ENCODE measurements at regions of chr1 and their contacts with region 1.

Region 1: GRCh38 chr1:108691942-108692723 is at the start of gene PRPF38B:
- DNase-seq: peak; percentile 96 to 99 (median 98)
- ATAC-seq: peak; percentile 91
- H3K4me3 ChIP-seq: peak within 1 kb of the TSS; percentile 74
- H3K27ac ChIP-seq: peak within 1 kb of the TSS; percentile 94
- H3K4me1 ChIP-seq: peaks cover 5 to 7% of the 10 kb centered on the region in 2 experiments; a peak in 3 of 5 replicates
- H3K27me3 ChIP-seq: no peaks in the 10 kb centered on the region
- CTCF ChIP-seq: no peak
- EP300 ChIP-seq: 0 out of 2 replicates have a peak, but pooled peaks have one; percentile 10
- POLR2A ChIP-seq: peak; percentile 99
- RAD21 ChIP-seq: no peak
- polyA plus RNA-seq, gene PRPF38B: 25.3 to 34.3 TPM

Region 2: GRCh38 chr1:108678706-108679105 is 13.4 kb before region 1 on chr1:
- CTCF ChIA-PET with region 1: interaction called, 3 read pairs
- POLR2A ChIA-PET with region 1: interaction called, 48 read pairs
- in situ Hi-C with region 1: no loop called
- intact Hi-C with region 1: no loop called
- DNase-seq: no peak
- ATAC-seq: no peak
- H3K4me3 ChIP-seq: no peak overlapping the region
- H3K27ac ChIP-seq: no peak overlapping the region
- H3K4me1 ChIP-seq: no peaks in the 10 kb centered on the region
- H3K27me3 ChIP-seq: no peaks in the 10 kb centered on the region
- CTCF ChIP-seq: no peak
- EP300 ChIP-seq: no peak
- POLR2A ChIP-seq: no peak
- RAD21 ChIP-seq: no peak

Region 3: DNA sequence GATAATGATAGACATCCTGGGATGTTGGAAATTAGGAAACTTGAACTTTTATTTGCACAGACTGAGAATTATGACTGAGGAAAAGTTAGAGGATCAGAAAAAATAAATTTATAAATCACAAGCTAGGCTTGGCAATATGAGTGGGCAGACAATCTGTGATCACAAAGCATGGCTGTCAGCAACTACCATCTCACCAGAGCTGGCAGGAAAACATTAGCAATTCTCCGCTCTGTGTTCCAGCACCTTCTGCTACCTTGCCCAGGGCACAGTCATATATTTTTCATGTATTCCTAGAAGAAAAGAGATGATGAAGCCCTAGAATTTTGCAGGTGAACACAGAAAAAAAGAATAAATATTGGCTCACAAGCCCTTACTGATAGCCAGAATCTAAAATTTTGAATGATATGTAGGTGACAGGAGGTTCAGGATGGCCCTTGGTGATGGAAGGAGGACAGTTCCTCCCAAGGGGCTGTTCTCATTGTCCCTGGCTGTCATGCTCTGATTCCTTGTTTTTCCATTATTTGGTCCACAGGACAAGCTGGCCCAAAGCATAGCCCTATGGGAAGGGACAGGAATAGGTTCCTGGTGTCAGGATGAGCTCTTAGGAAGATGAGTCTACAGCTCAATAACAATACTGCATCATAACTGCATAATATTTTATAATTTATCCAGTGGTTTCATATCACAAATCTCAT is 42.2 kb after region 1 on chr1:
- CTCF ChIA-PET with region 1: no interaction called
- POLR2A ChIA-PET with region 1: no interaction called
- in situ Hi-C with region 1: no loop called
- intact Hi-C with region 1: no loop called
- DNase-seq: no peak
- ATAC-seq: no peak
- H3K4me3 ChIP-seq: no peak overlapping the region
- H3K27ac ChIP-seq: no peak overlapping the region
- H3K4me1 ChIP-seq: no peaks in the 10 kb centered on the region
- H3K27me3 ChIP-seq: peaks cover 3 to 11% of the 10 kb centered on the region in 2 experiments; a peak in 4 of 5 replicates
- CTCF ChIP-seq: no peak
- EP300 ChIP-seq: no peak
- POLR2A ChIP-seq: no peak
- RAD21 ChIP-seq: no peak

Region 4: GRCh38 chr1:108947871-108948525 is 255.9 kb after region 1 on chr1:
- CTCF ChIA-PET with region 1: no interaction called
- POLR2A ChIA-PET with region 1: no interaction called
- in situ Hi-C with region 1: no loop called
- intact Hi-C with region 1: no loop called
- DNase-seq: no peak
- ATAC-seq: no peak
- H3K4me3 ChIP-seq: no peak overlapping the region
- H3K27ac ChIP-seq: no peak overlapping the region
- H3K4me1 ChIP-seq: no peaks in the 10 kb centered on the region
- H3K27me3 ChIP-seq: no peaks in the 10 kb centered on the region
- CTCF ChIP-seq: no peak
- EP300 ChIP-seq: no peak
- POLR2A ChIP-seq: no peak
- RAD21 ChIP-seq: no peak

Measured in K562 (cell line).